ENCODE measurements at regions of chr2 and their contacts with region 1.

Region 1: GRCh38 chr2:20446917-20447436 is at the start of gene RHOB:
- DNase-seq: peak; percentile 96 to 99 (median 99)
- H3K4me3 ChIP-seq: peak within 1 kb of the TSS; percentile 75 to 100 (median 96)
- H3K27ac ChIP-seq: peak within 1 kb of the TSS; percentile 88 to 100 (median 99)
- H3K27me3 ChIP-seq: no peaks in the 10 kb centered on the region
- CTCF ChIP-seq: peak in 19 of 56 donors; percentile 3 to 50 (median 24)
- total RNA-seq, gene RHOB: 206 to 544 (median 321) TPM

Region 2: GRCh38 chr2:20516646-20517341 is 69.8 kb after region 1 on chr2:
- intact Hi-C with region 1: loop called (anchors 2 kb)
- DNase-seq: peak in 8 of 10 donors; percentile 43 to 77 (median 72)
- H3K4me3 ChIP-seq: peak overlapping the region in 18 of 59 donors; percentile 1 to 52 (median 22)
- H3K27ac ChIP-seq: peak overlapping the region; percentile 84 to 99 (median 96)
- H3K27me3 ChIP-seq: no peaks in the 10 kb centered on the region
- CTCF ChIP-seq: peak in 1 of 56 donors; percentile 23

Region 3: DNA sequence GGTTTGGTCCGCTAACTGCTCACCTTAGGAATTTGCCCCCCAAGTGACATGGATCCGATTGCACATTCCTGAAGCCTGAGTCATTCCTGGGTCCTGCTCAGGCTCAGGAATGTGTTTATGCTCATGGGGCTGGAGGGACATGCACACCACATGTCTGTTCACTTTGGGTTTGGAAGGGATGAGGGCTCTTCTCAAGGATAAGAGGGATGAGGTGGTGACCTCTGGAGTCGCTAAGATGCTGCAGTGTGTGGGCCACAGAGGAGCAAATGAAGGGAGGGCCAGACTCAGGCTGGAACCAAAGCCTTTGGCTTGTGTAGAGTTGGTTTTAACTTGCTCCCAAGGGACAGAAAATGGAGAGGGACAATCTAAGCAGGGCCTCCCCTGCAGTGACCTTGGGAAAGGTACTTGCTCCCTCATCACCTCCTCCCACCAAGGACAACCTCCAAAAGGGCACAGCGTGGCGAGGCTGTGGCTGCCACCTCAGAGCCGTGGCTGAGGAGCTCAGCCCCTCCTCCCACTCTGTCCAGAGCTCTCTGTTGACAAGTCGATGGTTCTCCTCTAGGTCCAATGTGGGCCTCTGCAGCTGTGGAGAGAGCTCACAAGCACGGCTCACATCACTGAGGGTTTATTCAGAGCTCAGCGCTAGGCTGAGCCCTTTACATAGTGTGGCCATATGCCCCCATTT is 137.8 kb after region 1 on chr2:
- intact Hi-C with region 1: loop called (anchors 2 to 5 kb)
- DNase-seq: peak in 9 of 10 donors; percentile 43 to 89 (median 71)
- H3K4me3 ChIP-seq: no peak overlapping the region
- H3K27ac ChIP-seq: peak overlapping the region; percentile 7 to 90 (median 80)
- H3K27me3 ChIP-seq: no peaks in the 10 kb centered on the region
- CTCF ChIP-seq: peak in 6 of 56 donors; percentile 8 to 37 (median 15)

Region 4: GRCh38 chr2:20617892-20618467 is 171.0 kb after region 1 on chr2:
- intact Hi-C with region 1: loop called in 1 of 2 experiments (anchors 5 kb)
- DNase-seq: peak; percentile 85 to 96 (median 94)
- H3K4me3 ChIP-seq: peak overlapping the region in 2 of 59 donors; percentile 2 to 18
- H3K27ac ChIP-seq: peak overlapping the region; percentile 79 to 99 (median 94)
- H3K27me3 ChIP-seq: no peaks in the 10 kb centered on the region
- CTCF ChIP-seq: peak in 52 of 56 donors; percentile 16 to 70 (median 54)

Region 5: GRCh38 chr2:20642055-20642971 is 195.3 kb after region 1 on chr2:
- intact Hi-C with region 1: loop called in 1 of 2 experiments (anchors 2 kb)
- DNase-seq: peak; percentile 72 to 91 (median 84)
- H3K4me3 ChIP-seq: peak overlapping the region in 5 of 59 donors; percentile 2 to 17 (median 8)
- H3K27ac ChIP-seq: peak overlapping the region in 48 of 59 donors; percentile 10 to 85 (median 64)
- H3K27me3 ChIP-seq: no peaks in the 10 kb centered on the region
- CTCF ChIP-seq: peak; percentile 54 to 98 (median 94)

Measured in dorsolateral prefrontal cortex (tissue), 120 donors.